ENCODE measurements at regions of chr15 and their contacts with region 1.

Region 1: GRCh38 chr15:40769274-40770146 is at the start of gene C15orf62:
- DNase-seq: peak; percentile 71
- CTCF ChIP-seq: no peak

Region 2: DNA sequence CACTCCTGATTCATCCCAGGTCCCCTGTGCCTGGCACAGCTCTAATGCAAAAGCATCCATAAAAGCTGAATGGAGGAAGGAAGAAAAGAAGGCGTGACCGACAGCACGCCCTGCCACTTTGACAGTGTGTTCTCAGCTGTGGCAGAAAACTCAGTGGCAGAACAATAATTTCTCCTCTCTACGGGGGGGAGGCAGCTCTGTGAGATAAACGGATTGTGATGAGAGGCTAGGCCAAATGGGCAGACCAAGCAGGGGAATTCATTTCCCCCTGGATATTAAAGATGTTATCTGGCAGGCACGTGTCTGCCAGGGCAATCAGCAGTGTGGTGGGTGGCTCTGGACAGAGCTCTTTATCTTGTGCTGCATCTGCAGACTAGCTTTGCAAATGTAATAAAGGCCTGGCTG is 12.6 kb before region 1 on chr15:
- CTCF ChIA-PET with region 1: interaction called, 18 read pairs
- POLR2A ChIA-PET with region 1: no interaction called
- DNase-seq: no peak
- CTCF ChIP-seq: no peak